H1 (cell line): ENCODE measurements at regions of chr5 and their contacts with region 1.

Region 1: DNA sequence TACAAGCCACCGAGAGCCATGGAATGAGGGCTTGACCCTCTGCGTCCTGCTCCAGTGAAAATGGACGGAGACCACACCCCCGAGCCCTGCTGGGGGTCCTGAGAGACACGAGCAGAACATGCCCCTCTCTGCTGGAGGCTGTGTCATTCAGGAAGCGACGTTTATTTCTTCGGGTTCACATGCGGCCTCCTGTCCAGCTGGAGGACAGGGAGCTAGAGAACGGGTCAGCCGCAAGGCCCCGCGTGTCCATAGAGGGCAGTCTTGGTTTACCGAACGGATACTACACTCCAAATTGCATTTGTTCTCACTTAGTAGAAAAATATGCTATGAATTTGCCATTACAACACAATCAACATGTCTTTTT is 36.1 kb downstream of the MRPL36 start:
- DNase-seq: peak in 1 of 2 experiments; percentile 64
- H3K4me3 ChIP-seq: no peak overlapping the region
- H3K27ac ChIP-seq: no peak overlapping the region
- H3K4me1 ChIP-seq: peaks cover 0 to 6% (median 0%) of the 10 kb centered on the region in 4 experiments; a peak in 5 of 7 replicates
- H3K27me3 ChIP-seq: no peaks in the 10 kb centered on the region; a peak in 1 of 7 replicates
- CTCF ChIP-seq: peak; percentile 55 to 90 (median 84)
- EP300 ChIP-seq: no peak
- POLR2A ChIP-seq: no peak
- RAD21 ChIP-seq: peak; percentile 85 to 87

Region 2: GRCh38 chr5:1724822-1725643 is 38.5 kb before region 1 on chr5:
- CTCF ChIA-PET with region 1: interaction called, 11 read pairs
- POLR2A ChIA-PET with region 1: no interaction called
- DNase-seq: peak in 1 of 2 experiments; percentile 73
- H3K4me3 ChIP-seq: peak overlapping the region; percentile 27 to 53 (median 36)
- H3K27ac ChIP-seq: no peak overlapping the region
- H3K4me1 ChIP-seq: peaks cover 0 to 17% (median 14%) of the 10 kb centered on the region in 4 experiments; a peak in 6 of 7 replicates
- H3K27me3 ChIP-seq: peaks cover 0 to 9% (median 3%) of the 10 kb centered on the region in 4 experiments; a peak in 2 of 7 replicates
- CTCF ChIP-seq: no peak
- EP300 ChIP-seq: no peak
- POLR2A ChIP-seq: no peak
- RAD21 ChIP-seq: no peak

Region 3: DNA sequence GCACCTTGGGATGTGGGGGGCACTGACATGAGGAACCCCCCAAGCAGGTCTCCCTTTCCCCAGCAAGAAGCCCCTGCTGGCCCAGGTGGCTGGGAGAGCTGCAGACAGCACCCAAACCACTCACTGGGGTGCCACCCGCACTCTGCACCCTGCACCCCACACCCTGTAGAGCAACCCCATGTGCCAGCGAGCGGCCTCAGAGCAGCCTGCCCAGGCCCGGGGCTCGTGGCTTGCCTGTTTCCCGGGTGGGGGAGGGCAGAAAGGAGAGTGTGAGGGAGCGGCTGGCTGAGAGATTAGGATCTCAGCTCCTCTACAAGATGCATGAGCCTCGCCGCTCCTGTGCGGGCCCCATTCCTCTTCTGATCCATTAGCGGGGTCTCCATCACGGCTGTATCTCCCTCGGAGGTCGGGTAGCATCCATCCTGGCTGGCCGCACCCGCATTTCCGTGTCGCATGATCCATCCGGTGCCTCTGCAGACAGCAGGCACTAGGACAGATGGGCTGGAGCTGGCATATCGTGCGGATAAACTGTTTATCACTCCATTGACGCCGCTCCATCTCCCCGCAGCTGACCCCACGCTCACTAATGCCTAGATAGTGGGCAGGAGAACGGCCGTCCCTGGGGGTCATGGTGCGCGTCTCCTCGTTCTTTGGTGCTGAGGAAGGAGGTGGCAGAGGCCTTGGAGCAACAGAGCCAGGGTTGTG is 18.3 kb before region 1 on chr5:
- CTCF ChIA-PET with region 1: interaction called, 27 read pairs
- POLR2A ChIA-PET with region 1: no interaction called
- DNase-seq: no peak
- H3K4me3 ChIP-seq: no peak overlapping the region
- H3K27ac ChIP-seq: no peak overlapping the region
- H3K4me1 ChIP-seq: no peaks in the 10 kb centered on the region
- H3K27me3 ChIP-seq: no peaks in the 10 kb centered on the region
- CTCF ChIP-seq: no peak
- EP300 ChIP-seq: no peak
- POLR2A ChIP-seq: no peak
- RAD21 ChIP-seq: no peak

Region 4: GRCh38 chr5:1778138-1779020 is 14.8 kb after region 1 on chr5:
- CTCF ChIA-PET with region 1: interaction called, 19 read pairs
- POLR2A ChIA-PET with region 1: no interaction called
- DNase-seq: no peak
- H3K4me3 ChIP-seq: no peak overlapping the region
- H3K27ac ChIP-seq: no peak overlapping the region
- H3K4me1 ChIP-seq: no peaks in the 10 kb centered on the region
- H3K27me3 ChIP-seq: no peaks in the 10 kb centered on the region
- CTCF ChIP-seq: no peak
- EP300 ChIP-seq: no peak
- POLR2A ChIP-seq: no peak
- RAD21 ChIP-seq: no peak

Region 5: DNA sequence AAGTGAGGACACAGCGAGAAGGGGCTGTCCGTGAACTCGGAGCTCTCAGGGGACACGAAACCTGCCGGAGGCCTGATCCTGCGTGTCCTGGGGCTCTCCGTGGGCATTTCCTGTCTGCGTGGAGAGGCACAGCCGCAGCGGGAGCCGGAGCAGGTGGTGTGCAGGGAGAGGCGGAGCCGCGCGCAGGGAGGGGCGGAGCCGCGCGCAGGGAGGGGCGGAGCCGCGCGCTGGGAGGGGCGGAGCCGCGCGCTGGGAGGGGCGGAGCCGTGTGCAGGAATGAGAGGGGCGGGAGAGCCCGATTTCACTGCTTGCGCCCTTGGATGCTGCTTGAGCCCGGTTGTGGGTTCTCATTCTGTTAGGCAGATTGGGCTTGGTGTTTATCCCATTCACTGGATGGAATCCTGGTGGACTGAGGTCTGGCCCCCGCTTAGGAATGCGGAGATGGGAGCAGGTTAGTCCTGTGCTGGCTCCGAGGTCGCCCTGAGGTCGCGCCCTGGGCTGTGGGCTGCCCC is 64.4 kb after region 1 on chr5:
- CTCF ChIA-PET with region 1: interaction called, 12 read pairs
- POLR2A ChIA-PET with region 1: no interaction called
- DNase-seq: peak in 1 of 2 experiments; percentile 81
- H3K4me3 ChIP-seq: peak overlapping the region in 2 of 4 experiments; percentile 16 to 47; a peak in 3 of 8 replicates
- H3K27ac ChIP-seq: no peak overlapping the region
- H3K4me1 ChIP-seq: peaks cover 0 to 13% (median 7%) of the 10 kb centered on the region in 4 experiments; a peak in 6 of 7 replicates
- H3K27me3 ChIP-seq: no peaks in the 10 kb centered on the region
- CTCF ChIP-seq: no peak
- EP300 ChIP-seq: no peak
- POLR2A ChIP-seq: no peak
- RAD21 ChIP-seq: no peak

Region 6: DNA sequence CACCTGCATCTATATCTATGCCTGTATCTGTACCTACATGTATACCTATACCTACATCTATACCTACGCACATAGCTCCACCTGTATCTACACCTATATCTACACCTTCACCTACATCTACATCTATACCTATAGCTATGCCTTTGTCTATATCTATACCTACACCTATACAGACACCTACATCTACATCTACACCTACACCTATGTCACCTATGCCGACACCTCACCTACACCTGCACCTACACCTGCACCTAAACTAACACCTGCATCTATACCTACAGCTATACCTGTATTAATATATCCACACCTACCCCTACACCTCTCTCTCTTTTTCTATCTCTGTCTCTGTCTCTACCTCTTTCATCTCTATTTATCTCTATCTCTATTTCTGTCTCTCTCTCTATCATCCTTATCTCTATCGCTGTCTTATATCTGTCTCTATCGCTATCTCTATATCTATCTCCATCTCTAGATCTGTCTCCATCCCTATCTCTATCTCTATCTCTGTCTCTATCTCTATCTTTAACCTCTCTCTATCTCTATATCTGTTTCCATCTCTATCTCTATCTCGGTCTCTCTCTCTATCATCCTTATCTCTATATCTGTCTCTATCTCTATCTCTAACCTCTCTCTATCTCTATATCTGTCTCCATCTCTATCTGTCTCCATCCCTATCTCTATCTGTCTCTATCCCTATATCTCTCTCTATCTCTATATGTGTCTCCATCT is 81.3 kb after region 1 on chr5:
- CTCF ChIA-PET with region 1: no interaction called
- POLR2A ChIA-PET with region 1: no interaction called
- DNase-seq: no peak
- H3K4me3 ChIP-seq: no peak overlapping the region
- H3K27ac ChIP-seq: no peak overlapping the region
- H3K4me1 ChIP-seq: peaks cover 0 to 8% (median under 1%) of the 10 kb centered on the region in 4 experiments; a peak in 3 of 7 replicates
- H3K27me3 ChIP-seq: peaks cover 0 to 23% (median 12%) of the 10 kb centered on the region in 4 experiments; a peak in 6 of 7 replicates
- CTCF ChIP-seq: no peak
- EP300 ChIP-seq: no peak
- POLR2A ChIP-seq: no peak
- RAD21 ChIP-seq: no peak

Region 7: DNA sequence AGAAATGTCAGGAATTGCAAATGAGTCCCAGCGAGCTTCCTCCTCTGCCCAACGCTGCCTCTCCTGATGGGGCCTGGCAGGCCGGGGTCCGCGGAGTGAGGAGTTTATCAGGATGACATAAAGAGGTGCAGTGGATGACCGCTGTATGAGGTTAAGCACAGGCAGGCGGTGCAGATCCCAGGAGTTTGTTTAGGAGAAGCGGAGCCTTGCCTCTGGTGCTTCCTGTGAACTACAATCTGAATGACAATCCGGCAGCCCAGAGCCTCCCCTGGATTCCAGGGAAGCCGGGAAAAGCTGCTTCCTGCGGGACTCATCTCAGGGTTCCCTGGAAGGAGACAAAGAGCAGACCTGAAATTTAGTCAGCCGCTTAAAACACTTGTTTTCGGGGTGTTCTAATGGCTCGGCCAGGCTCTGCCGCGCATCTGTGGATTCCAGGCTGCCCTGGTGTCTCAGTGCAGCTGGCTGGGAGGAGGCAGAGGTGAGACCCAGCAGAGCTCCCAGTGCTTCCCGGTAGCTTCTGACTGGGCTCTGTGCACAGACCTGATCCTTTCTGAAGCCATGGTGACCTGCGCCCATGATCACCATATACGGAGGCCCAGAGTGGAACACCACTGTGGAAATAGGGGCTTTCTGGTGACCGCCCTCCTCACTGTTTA is 189.0 kb after region 1 on chr5:
- CTCF ChIA-PET with region 1: interaction called, 10 read pairs
- POLR2A ChIA-PET with region 1: no interaction called
- DNase-seq: peak in 1 of 2 experiments; percentile 68
- H3K4me3 ChIP-seq: peak overlapping the region in 2 of 4 experiments; percentile 1 to 12; a peak in 1 of 8 replicates
- H3K27ac ChIP-seq: peak overlapping the region; percentile 62; the same call in 1 of the 2 replicates
- H3K4me1 ChIP-seq: peaks cover 0 to 17% (median 11%) of the 10 kb centered on the region in 4 experiments; a peak in 6 of 7 replicates
- H3K27me3 ChIP-seq: peaks cover 0 to 4% (median 1%) of the 10 kb centered on the region in 4 experiments; a peak in 3 of 7 replicates
- CTCF ChIP-seq: peak in 2 of 3 experiments; percentile 16 to 29; a peak in 1 of 4 replicates
- EP300 ChIP-seq: no peak
- POLR2A ChIP-seq: no peak
- RAD21 ChIP-seq: no peak; a peak in 2 of 4 replicates